ENCODE measurements at regions of chr13 and their contacts with region 1.

Region 1: GRCh38 chr13:99900960-99901359 is 70.6 kb downstream of the ZIC5 start:
- DNase-seq: no peak
- H3K4me3 ChIP-seq: no peak overlapping the region
- H3K27ac ChIP-seq: no peak overlapping the region
- H3K4me1 ChIP-seq: peaks cover 0 to 3% (median 2%) of the 10 kb centered on the region in 4 experiments
- H3K27me3 ChIP-seq: peaks cover 0 to 70% (median 32%) of the 10 kb centered on the region in 5 experiments

Region 2: GRCh38 chr13:99677116-99677951 is 223.6 kb before region 1 on chr13:
- CTCF ChIA-PET with region 1: no interaction called
- POLR2A ChIA-PET with region 1: no interaction called
- DNase-seq: no peak
- H3K4me3 ChIP-seq: no peak overlapping the region
- H3K27ac ChIP-seq: no peak overlapping the region
- H3K4me1 ChIP-seq: no peaks in the 10 kb centered on the region
- H3K27me3 ChIP-seq: no peaks in the 10 kb centered on the region

Region 3: GRCh38 chr13:99911069-99911964 is 10.4 kb after region 1 on chr13:
- CTCF ChIA-PET with region 1: interaction called, 11 read pairs
- POLR2A ChIA-PET with region 1: no interaction called
- DNase-seq: no peak
- H3K4me3 ChIP-seq: no peak overlapping the region
- H3K27ac ChIP-seq: no peak overlapping the region
- H3K4me1 ChIP-seq: no peaks in the 10 kb centered on the region
- H3K27me3 ChIP-seq: peaks cover 0 to 69% (median 21%) of the 10 kb centered on the region in 5 experiments